Posterior cingulate gyrus (tissue), 11 donors: ENCODE measurements at regions of chrX and their contacts with region 1.

Region 1: DNA sequence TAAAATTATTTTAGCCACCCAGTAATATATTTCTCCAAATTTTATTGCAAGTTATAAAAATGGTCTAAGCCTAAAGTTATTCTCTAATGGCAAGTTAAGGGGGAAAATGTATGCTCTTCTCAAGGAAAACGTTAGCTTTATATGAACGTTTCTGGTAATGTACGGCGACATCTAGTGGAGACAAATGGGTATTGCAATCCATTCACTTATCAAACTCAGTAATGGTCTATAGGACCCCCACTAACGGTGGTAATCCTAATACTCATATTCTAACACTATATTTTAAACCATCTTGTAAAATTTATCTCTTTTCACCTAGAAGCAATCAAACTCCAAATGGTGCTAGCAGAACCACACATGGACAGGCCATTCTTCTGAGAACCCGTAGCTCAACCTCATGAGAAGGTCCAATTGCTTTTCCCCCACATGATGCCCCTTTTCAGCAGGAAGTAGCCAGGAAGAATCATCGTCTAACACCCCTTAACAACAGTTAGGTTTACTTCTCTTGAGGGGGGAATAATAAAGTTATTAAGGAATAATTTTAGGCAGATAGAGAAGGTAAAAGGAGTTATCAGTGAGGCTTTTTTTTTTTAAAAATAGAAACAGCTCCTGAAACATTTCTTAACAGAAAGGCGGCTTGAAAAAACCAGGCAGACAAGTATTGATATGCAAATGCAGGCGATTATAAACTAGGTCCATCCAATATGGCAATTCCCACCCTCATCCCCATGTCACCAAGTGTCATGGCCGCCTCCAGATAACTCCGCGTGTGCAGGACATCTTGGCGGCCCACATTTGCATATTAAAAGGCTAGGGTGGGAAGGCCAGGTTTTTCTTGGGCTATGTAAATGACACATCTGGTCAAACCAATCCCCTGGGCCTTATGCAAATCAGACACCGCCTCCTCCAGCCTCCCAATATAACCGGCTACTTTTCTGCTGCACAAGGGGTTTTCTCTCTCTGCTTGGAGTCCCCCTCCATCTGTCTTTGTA is 35.0 kb downstream of the NUDT11 start:
- DNase-seq: no peak

Region 2: DNA sequence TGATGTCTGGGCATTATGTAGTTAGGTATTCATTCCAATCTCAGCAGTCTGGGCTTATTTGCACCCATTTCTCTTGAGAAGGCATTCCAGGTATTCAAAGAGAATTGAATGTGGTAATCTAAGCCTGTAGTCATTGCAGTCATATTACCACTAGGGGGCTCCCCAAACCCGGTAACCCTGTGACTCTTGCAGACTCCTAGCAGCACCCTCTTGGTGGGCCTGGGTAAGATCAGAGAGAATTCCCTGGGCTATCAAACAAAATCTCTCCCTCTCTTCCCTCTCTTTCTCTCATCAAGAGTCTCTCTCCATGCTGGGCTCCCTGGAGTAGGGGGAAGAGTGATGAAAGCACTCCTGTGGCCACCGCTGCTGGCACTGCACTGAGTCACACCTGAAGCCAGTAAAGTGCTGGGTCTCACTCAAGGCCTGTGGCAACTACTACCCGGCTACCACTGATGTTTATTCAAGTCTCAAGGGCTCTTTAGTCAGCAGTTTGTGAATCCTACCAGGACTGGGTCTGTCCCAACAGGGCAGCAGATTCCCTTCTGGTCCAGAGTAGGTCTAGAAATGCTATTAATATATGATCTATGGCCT is 316.4 kb before region 1 on chrX:
- intact Hi-C with region 1: loop called (anchors 10 kb)
- DNase-seq: peak in 1 of 10 donors; percentile 2

Region 3: GRCh38 chrX:51336584-51336983 is 124.8 kb before region 1 on chrX:
- intact Hi-C with region 1: loop called (anchors 2 kb)
- DNase-seq: peak in 1 of 10 donors; percentile 73